ENCODE measurements at regions of chr15 and their contacts with region 1.

Region 1: GRCh38 chr15:78751602-78751979 is 59.7 kb downstream of the ADAMTS7 start:
- DNase-seq: no peak
- H3K4me3 Mint-ChIP-seq: no peak overlapping the region
- H3K27ac Mint-ChIP-seq: no peak overlapping the region
- H3K4me1 Mint-ChIP-seq: peaks cover 5% of the 10 kb centered on the region
- H3K27me3 Mint-ChIP-seq: peaks cover 5% of the 10 kb centered on the region

Region 2: GRCh38 chr15:78618490-78618934 is 133.1 kb before region 1 on chr15:
- intact Hi-C with region 1: loop called (anchors 1 kb)
- DNase-seq: peak; percentile 94
- H3K4me3 Mint-ChIP-seq: no peak overlapping the region
- H3K27ac Mint-ChIP-seq: no peak overlapping the region
- H3K4me1 Mint-ChIP-seq: peaks cover 2% of the 10 kb centered on the region
- H3K27me3 Mint-ChIP-seq: peaks cover 41% of the 10 kb centered on the region

Region 3: GRCh38 chr15:78830514-78831228 is 79.1 kb after region 1 on chr15:
- intact Hi-C with region 1: no loop called
- DNase-seq: no peak
- H3K4me3 Mint-ChIP-seq: peak overlapping the region; percentile 44
- H3K27ac Mint-ChIP-seq: no peak overlapping the region
- H3K4me1 Mint-ChIP-seq: no peaks in the 10 kb centered on the region
- H3K27me3 Mint-ChIP-seq: peaks cover 17% of the 10 kb centered on the region

Measured in activated CD4-positive, alpha-beta T cell treated with anti-CD3 and anti-CD28 coated beads, Interleukin-2, amount 10 ng/mL, durations not matched to agents 24 days and 14 days (primary cell).